ENCODE measurements at regions of chr12 and their contacts with region 1.

Region 1: GRCh38 chr12:62484233-62484632 is 17.6 kb downstream of the MON2 start:
- DNase-seq: no peak
- ATAC-seq: no peak
- H3K4me3 ChIP-seq: no peak overlapping the region
- H3K4me3 Mint-ChIP-seq: no peak overlapping the region
- H3K27ac ChIP-seq: no peak overlapping the region
- H3K27ac Mint-ChIP-seq: no peak overlapping the region
- H3K4me1 ChIP-seq: no peaks in the 10 kb centered on the region
- H3K4me1 Mint-ChIP-seq: peaks cover 10 to 57% (median 32%) of the 10 kb centered on the region in 7 donors
- H3K27me3 ChIP-seq: no peaks in the 10 kb centered on the region
- H3K27me3 Mint-ChIP-seq: no peaks in the 10 kb centered on the region

Region 2: DNA sequence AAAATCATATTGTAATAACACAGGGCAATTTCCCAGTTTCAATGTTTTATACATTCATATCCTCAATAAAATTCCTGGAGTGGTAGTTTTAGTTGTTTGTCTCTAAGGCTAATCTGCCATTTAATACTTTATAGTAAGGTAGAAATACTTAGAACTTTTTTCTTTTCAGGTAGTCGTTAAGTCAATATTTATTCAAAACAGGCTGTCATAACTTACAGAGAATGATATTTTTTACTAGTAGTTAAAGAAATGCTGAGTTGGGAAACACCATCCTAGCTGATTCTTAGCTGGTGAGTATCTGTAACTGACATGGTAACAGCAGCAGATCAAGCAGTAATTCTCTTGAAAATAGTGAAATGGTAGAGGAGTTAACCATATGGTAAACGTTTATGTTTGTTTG is 15.8 kb after region 1 on chr12:
- CTCF ChIA-PET with region 1: no interaction called
- POLR2A ChIA-PET with region 1: no interaction called
- intact Hi-C with region 1: loop called in 1 of 2 experiments (anchors 2 kb)
- DNase-seq: no peak
- ATAC-seq: no peak
- H3K4me3 ChIP-seq: no peak overlapping the region
- H3K4me3 Mint-ChIP-seq: no peak overlapping the region
- H3K27ac ChIP-seq: no peak overlapping the region
- H3K27ac Mint-ChIP-seq: peak overlapping the region in 1 of 9 donors; percentile 23
- H3K4me1 ChIP-seq: no peaks in the 10 kb centered on the region
- H3K4me1 Mint-ChIP-seq: peaks cover 0 to 5% (median 0%) of the 10 kb centered on the region in 7 donors
- H3K27me3 ChIP-seq: no peaks in the 10 kb centered on the region
- H3K27me3 Mint-ChIP-seq: no peaks in the 10 kb centered on the region

Measured in naive thymus-derived CD4-positive, alpha-beta T cell (primary cell).